Activated naive CD8-positive, alpha-beta T cell treated with anti-CD3 and anti-CD28 coated beads, Interleukin-2, amount 10 ng/mL, durations not matched to agents 7 days and 5 days (primary cell): ENCODE measurements at regions of chrX and their contacts with region 1.

Region 1: GRCh38 chrX:71103110-71103983 is 3.2 kb downstream of the CXorf65 start:
- DNase-seq: peak; percentile 60
- ATAC-seq: peak; percentile 57
- H3K4me3 Mint-ChIP-seq: peak overlapping the region; percentile 85
- H3K27ac Mint-ChIP-seq: peak overlapping the region; percentile 90
- H3K4me1 Mint-ChIP-seq: peaks cover 57% of the 10 kb centered on the region
- H3K27me3 Mint-ChIP-seq: no peaks in the 10 kb centered on the region

Region 2: GRCh38 chrX:71118032-71118984 is 15.0 kb after region 1 on chrX and contains the start of gene MED12:
- POLR2A ChIA-PET with region 1: interaction called, 106 read pairs
- DNase-seq: peak; percentile 83
- ATAC-seq: peak; percentile 93
- H3K4me3 Mint-ChIP-seq: peak within 1 kb of the TSS; percentile 82
- H3K27ac Mint-ChIP-seq: peak within 1 kb of the TSS; percentile 86
- H3K4me1 Mint-ChIP-seq: peaks cover 14% of the 10 kb centered on the region
- H3K27me3 Mint-ChIP-seq: no peaks in the 10 kb centered on the region
- total RNA-seq, gene MED12: 64.7 to 77.1 TPM

Region 3: DNA sequence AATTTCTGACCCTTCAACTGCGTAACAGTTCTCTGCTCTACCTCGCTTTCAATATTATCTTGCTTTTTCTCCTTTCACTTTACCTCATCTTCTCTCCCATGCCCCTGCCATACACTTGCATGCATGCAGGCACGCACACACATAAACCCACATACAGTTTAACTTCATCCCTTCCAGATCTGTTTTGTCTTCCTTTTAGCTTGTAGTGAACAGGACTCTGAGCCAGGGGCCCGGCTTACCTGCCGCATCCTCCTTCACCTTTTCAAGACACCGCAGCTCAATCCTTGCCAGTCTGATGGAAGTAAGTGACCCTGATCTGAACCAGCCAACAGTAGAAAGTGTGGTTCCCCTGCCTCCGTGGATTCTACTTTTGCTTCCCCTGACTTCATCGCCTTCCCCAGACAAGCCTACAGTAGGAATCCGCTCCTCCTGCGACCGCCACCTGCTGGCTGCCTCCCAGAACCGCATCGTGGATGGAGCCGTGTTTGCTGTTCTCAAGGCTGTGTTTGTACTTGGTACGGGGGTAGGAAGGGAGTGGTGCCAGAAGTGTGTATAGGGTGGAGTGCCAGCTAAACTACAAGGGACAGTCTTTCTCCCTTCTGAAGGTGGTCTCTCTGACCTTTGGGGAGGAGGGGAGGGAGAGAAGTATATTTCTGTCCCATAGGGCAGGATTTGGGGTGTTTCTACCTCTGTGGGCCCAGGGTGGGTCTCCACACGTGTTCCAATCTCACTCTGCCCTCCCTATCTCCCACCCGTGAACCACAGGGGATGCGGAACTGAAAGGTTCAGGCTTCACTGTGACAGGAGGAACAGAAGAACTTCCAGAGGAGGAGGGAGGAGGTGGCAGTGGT is 25.8 kb after region 1 on chrX:
- POLR2A ChIA-PET with region 1: interaction called, 10 read pairs
- DNase-seq: peak; percentile 78
- ATAC-seq: peak; percentile 93
- H3K4me3 Mint-ChIP-seq: peak overlapping the region; percentile 61
- H3K27ac Mint-ChIP-seq: peak overlapping the region; percentile 84
- H3K4me1 Mint-ChIP-seq: peaks cover 10% of the 10 kb centered on the region
- H3K27me3 Mint-ChIP-seq: no peaks in the 10 kb centered on the region